Calu3 (cell line): ENCODE measurements at regions of chr17 and their contacts with region 1.

Region 1: DNA sequence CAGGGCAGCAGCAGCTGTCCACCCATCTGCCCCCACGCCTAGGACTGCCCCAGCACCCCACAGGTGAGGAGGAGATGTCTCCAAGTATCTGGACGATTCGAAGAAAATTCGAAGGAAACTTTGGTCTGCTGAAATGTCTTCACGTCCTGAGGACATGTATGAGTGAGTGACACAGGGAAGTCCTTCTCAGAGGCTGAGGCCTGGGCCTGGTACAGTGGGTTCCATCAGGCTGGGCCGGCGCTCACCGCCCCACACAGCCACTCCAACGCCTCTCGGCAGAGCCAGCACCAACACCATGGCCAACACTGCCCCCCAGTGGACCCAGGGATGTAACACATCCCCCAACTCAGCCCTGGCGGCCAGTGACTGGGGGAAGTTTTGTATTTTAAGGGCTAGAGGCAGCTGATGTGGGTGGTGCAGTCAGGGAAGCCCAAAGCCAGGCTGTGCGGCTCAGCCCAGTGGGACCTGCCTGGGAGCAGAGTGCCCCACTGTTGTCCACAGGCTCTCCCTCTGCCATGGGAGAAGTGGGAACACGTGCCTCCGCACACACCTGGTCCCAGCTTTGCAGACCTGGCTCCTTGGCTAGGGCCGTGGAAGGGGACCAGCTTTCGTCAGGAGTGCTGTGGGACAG is 55.8 kb upstream of the FASN start:
- DNase-seq: peak; percentile 86
- H3K4me3 Mint-ChIP-seq: no peak overlapping the region
- H3K27ac Mint-ChIP-seq: no peak overlapping the region
- H3K4me1 Mint-ChIP-seq: no peaks in the 10 kb centered on the region
- H3K27me3 Mint-ChIP-seq: no peaks in the 10 kb centered on the region
- CTCF ChIP-seq: peak; percentile 91

Region 2: DNA sequence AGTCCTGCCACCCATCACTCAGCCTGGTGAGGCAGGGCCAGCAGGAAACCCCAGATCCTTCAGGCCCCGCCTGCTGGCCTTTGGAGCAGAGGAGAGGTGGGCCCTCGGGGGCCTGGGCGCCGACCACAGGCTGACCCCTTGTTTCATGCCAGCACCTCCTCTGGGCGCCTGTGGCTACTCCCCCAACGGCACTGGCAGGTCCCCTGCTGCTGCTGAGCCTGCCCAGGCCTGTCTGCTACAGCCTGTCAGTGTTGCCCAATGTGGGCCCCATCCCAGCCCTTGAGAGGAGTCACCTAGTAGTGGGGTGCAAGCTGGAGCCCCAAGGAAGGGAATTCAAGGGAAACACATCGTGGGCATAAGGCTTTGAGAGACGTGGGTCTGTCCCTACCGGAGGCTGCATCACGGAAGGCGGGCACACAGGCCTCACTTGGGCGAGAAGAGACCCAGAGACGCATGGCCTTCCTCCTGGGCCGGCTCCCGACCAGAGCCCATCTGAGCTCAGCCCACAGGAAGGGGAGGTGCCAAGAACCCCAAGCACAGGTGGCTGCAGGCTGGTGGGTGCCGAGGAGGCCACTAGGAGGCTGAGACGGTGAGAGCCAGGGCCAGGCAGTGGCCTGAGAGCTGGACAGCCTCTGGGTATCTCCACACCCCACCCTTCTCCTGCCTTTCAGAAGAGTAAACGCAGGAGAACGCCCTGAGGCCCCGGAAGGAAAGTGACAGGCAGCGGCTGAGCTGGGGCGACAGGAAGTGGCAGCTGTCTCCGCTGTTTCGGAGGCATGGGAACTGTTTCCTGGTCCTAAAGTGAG is 47.8 kb before region 1 on chr17:
- CTCF ChIA-PET with region 1: interaction called, 8 read pairs
- intact Hi-C with region 1: loop called (anchors 5 kb)
- DNase-seq: peak; percentile 89
- H3K4me3 Mint-ChIP-seq: peak overlapping the region; percentile 65
- H3K27ac Mint-ChIP-seq: peak overlapping the region; percentile 81
- H3K4me1 Mint-ChIP-seq: peaks cover 38% of the 10 kb centered on the region
- H3K27me3 Mint-ChIP-seq: no peaks in the 10 kb centered on the region
- CTCF ChIP-seq: peak; percentile 25